ENCODE measurements at regions of chr9 and their contacts with region 1.

Region 1: GRCh38 chr9:122099271-122099869 is 6.3 kb upstream of the TTLL11 start:
- DNase-seq: peak; percentile 81
- ATAC-seq: peak; percentile 92
- H3K4me3 ChIP-seq: peak overlapping the region; percentile 64
- H3K27ac ChIP-seq: no peak overlapping the region
- H3K4me1 ChIP-seq: 0 out of 2 replicates have a peak, but pooled peaks cover 3% of the 10 kb centered on the region
- H3K27me3 ChIP-seq: peaks cover 7% of the 10 kb centered on the region; the same call in 1 of the 2 replicates
- CTCF ChIP-seq: peak; percentile 70

Region 2: DNA sequence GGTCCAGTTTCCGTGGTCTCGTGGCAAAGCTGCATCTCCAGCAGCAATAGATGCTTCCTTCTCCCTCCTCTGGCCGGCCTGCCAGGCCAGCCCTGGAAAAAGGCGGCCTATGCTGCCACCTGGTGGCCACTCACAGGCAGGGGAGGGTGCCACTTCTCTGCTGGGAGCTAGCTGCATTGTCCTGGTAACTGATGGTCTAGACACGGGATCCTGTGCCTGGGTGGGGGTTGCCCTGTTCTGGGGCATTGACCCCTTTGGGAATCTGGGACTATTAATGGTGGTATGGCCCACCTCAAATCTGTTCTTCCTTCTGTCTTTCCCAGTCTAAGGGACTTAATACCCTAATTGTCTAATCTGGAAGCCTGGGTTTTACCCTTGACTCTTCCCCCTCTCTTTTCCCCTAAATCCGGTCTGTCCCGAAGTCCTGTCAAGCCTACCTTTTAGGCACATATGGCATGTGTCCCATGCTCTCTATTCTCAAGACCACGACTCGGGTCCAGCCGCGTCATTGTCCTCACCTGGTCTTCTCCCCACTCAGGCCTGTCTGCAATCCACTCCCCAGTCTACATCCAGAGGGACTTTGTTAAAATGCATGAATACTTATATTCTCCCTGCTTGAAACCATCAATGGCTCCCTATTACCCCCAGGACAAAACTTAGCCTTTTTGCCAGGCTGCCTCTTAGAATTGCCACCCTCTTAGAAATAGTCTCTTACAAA is 251.4 kb after region 1 on chr9:
- CTCF ChIA-PET with region 1: interaction called, 33 read pairs
- POLR2A ChIA-PET with region 1: no interaction called
- intact Hi-C with region 1: loop called (anchors 1 kb)
- DNase-seq: peak; percentile 75
- ATAC-seq: peak; percentile 87
- H3K4me3 ChIP-seq: no peak overlapping the region
- H3K27ac ChIP-seq: no peak overlapping the region
- H3K4me1 ChIP-seq: peaks cover 10% of the 10 kb centered on the region; the same call in 1 of the 2 replicates
- H3K27me3 ChIP-seq: no peaks in the 10 kb centered on the region
- CTCF ChIP-seq: peak; percentile 86

Region 3: DNA sequence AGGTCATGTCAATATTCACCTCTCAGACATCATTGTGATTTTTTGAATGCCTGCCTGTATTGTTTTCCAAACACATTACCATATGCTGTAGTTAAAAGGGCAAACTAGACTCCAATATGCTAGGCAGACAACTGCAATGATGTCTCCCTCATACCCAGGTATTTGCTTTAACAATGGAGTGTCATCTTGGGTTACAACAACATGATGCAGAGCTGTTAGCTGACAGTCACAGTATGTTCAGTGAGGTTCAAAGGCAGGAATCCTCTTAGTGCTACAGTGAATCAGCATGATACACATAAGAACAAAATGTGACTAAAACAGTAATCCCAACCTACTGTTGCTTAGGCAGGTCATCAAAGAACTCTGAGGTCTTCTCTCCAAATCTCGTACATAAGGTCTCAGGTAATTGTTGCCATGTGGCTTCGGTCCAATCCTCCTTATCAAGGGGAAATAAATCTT is 354.3 kb after region 1 on chr9:
- CTCF ChIA-PET with region 1: no interaction called
- POLR2A ChIA-PET with region 1: no interaction called
- intact Hi-C with region 1: loop called (anchors 5 kb)
- DNase-seq: no peak
- ATAC-seq: no peak
- H3K4me3 ChIP-seq: no peak overlapping the region
- H3K27ac ChIP-seq: no peak overlapping the region
- H3K4me1 ChIP-seq: no peaks in the 10 kb centered on the region
- H3K27me3 ChIP-seq: 0 out of 2 replicates have a peak, but pooled peaks cover 8% of the 10 kb centered on the region
- CTCF ChIP-seq: no peak

Region 4: DNA sequence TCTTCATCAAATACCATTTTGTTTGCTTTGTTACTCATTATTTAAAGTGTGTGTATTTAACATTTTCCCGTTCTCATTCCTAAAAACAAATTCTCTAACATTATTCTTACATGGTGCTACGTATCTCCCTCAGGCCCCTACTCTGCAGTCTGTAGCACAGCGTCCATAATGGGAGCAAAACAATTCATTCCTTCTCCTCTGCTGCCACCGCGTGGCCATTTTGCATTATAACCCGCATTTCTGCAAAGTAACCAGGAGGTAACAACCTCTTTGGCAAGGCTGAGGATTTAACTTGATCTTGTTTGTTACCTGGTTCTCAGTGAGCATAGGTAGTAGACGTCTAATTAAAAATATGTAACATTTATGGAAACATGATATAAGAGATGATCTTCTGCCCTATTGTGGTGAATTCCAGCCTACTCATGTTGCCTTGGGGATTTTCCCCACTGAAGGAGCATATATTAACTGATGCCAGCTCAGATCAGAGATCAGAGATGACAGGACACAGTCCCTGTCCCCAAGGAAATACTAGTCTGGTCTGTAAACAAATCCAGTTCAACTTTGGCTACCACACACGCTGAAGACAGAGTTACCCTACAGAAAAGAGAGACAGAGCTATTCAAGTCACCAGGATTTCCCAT is 711.1 kb after region 1 on chr9:
- CTCF ChIA-PET with region 1: no interaction called
- POLR2A ChIA-PET with region 1: no interaction called
- intact Hi-C with region 1: loop called (anchors 2 kb)
- DNase-seq: peak; percentile 86
- ATAC-seq: peak; percentile 91
- H3K4me3 ChIP-seq: peak overlapping the region; percentile 52; the same call in 1 of the 2 replicates
- H3K27ac ChIP-seq: no peak overlapping the region
- H3K4me1 ChIP-seq: peaks cover 7% of the 10 kb centered on the region
- H3K27me3 ChIP-seq: no peaks in the 10 kb centered on the region
- CTCF ChIP-seq: peak; percentile 81